Endothelial cell of umbilical vein (primary cell): ENCODE measurements at regions of chr4 and their contacts with region 1.

Region 1: GRCh38 chr4:77600521-77601451 is 4.8 kb upstream of the CXCL13 start:
- DNase-seq: peak; percentile 29
- H3K4me3 ChIP-seq: no peak overlapping the region
- H3K27ac ChIP-seq: no peak overlapping the region
- H3K4me1 ChIP-seq: no peaks in the 10 kb centered on the region
- H3K27me3 ChIP-seq: peaks cover 5 to 19% of the 10 kb centered on the region in 2 experiments
- CTCF ChIP-seq: peak; percentile 63 to 76
- POLR2A ChIP-seq: no peak

Region 2: DNA sequence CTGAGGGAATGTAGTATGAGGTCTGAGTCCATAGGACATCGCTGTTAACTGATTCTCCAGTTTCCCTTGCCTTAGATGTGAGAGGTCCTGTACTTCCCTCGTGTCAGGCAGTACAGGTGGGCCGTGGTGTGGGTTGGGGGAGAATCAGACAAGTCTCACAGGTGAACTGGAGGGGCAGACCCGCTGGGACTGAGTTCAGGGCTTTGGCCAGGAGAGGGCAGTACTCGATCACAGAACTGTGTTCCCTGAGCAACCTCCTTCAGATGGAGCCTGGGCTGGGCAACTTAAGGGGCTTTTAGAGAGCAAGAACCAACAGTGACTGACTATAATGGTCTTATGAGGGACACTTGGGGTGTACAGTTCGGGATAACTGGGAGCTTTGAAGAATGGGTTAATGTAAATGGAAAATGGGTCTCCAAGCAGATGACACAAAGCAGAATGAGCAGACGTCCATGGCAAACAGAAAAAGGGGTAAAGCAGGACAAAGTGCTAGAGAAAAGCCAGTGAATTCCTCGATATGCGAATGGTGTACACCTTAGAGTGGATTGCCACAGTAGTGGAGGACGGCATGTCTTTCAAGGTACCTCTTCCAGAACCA is 360.2 kb before region 1 on chr4:
- CTCF ChIA-PET with region 1: no interaction called
- POLR2A ChIA-PET with region 1: no interaction called
- dilution Hi-C with region 1: no loop called
- intact Hi-C with region 1: loop called (anchors 2 kb)
- DNase-seq: peak; percentile 56
- H3K4me3 ChIP-seq: no peak overlapping the region
- H3K27ac ChIP-seq: no peak overlapping the region
- H3K4me1 ChIP-seq: no peaks in the 10 kb centered on the region
- H3K27me3 ChIP-seq: peaks cover 2 to 4% of the 10 kb centered on the region in 2 experiments
- CTCF ChIP-seq: peak; percentile 70 to 84
- POLR2A ChIP-seq: no peak

Region 3: GRCh38 chr4:77385124-77385969 is 215.4 kb before region 1 on chr4:
- CTCF ChIA-PET with region 1: interaction called, 39 read pairs
- POLR2A ChIA-PET with region 1: no interaction called
- dilution Hi-C with region 1: no loop called
- intact Hi-C with region 1: loop called (anchors 1 kb)
- DNase-seq: peak; percentile 71
- H3K4me3 ChIP-seq: no peak overlapping the region
- H3K27ac ChIP-seq: no peak overlapping the region
- H3K4me1 ChIP-seq: no peaks in the 10 kb centered on the region
- H3K27me3 ChIP-seq: peaks cover 6 to 14% of the 10 kb centered on the region in 2 experiments
- CTCF ChIP-seq: peak; percentile 81
- POLR2A ChIP-seq: no peak

Region 4: GRCh38 chr4:77613267-77613666 is 12.5 kb after region 1 on chr4:
- CTCF ChIA-PET with region 1: interaction called, 25 read pairs
- POLR2A ChIA-PET with region 1: no interaction called
- dilution Hi-C with region 1: no loop called
- intact Hi-C with region 1: no loop called
- DNase-seq: no peak
- H3K4me3 ChIP-seq: no peak overlapping the region
- H3K27ac ChIP-seq: no peak overlapping the region
- H3K4me1 ChIP-seq: no peaks in the 10 kb centered on the region
- H3K27me3 ChIP-seq: peaks cover 16 to 23% of the 10 kb centered on the region in 2 experiments
- CTCF ChIP-seq: no peak
- POLR2A ChIP-seq: no peak

Region 5: DNA sequence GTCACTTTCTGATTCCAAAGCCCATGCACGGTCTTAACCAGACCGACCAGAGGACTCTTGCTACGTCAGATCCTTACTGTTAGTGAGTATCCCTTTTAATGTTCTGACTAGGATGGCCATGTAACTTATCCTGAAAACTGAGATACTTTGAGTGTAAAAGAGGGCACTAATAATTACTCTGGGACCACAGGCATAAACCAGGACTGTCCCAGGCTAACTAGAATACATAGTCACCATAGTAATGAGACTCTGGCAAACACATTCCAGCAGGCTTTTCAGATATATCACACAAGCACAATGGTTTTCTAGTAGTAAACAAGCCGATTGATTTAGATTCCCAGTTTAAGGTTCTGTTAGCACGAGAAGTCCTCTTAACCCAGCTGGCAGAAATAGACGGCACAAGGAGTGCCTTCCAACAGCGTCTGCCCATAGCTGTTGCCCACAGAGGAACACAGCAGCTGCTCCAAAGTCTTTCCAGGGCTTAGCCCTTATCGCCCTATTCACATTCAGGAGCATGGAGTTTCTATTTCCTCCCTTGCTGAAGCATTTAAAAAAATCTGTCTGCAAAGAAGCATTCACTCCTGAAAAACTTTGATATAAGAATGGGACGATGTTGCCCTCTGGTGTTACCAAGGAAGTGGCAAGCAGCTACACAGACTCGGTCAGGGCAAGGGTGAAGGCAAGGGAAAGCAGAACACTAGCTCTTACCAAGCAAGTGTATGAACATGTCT is 97.2 kb after region 1 on chr4:
- CTCF ChIA-PET with region 1: interaction called, 26 read pairs
- POLR2A ChIA-PET with region 1: no interaction called
- dilution Hi-C with region 1: no loop called
- intact Hi-C with region 1: no loop called
- DNase-seq: peak; percentile 89
- H3K4me3 ChIP-seq: no peak overlapping the region
- H3K27ac ChIP-seq: no peak overlapping the region
- H3K4me1 ChIP-seq: peaks cover 27% of the 10 kb centered on the region
- H3K27me3 ChIP-seq: no peaks in the 10 kb centered on the region
- CTCF ChIP-seq: peak; percentile 41 to 50
- POLR2A ChIP-seq: no peak